BJ (cell line): ENCODE measurements at regions of chr4 and their contacts with region 1.

Region 1: GRCh38 chr4:112266821-112267220 is 18.9 kb downstream of the TIFA start:
- DNase-seq: no peak
- H3K4me3 ChIP-seq: no peak overlapping the region
- H3K27me3 ChIP-seq: no peaks in the 10 kb centered on the region
- CTCF ChIP-seq: peak; percentile 59

Region 2: GRCh38 chr4:112279025-112279881 is 12.4 kb after region 1 on chr4:
- CTCF ChIA-PET with region 1: interaction called, 11 read pairs
- POLR2A ChIA-PET with region 1: no interaction called
- DNase-seq: no peak
- H3K4me3 ChIP-seq: no peak overlapping the region
- H3K27me3 ChIP-seq: no peaks in the 10 kb centered on the region
- CTCF ChIP-seq: no peak